Ovary (tissue), 10 donors: ENCODE measurements at regions of chr14 and their contacts with region 1.

Region 1: DNA sequence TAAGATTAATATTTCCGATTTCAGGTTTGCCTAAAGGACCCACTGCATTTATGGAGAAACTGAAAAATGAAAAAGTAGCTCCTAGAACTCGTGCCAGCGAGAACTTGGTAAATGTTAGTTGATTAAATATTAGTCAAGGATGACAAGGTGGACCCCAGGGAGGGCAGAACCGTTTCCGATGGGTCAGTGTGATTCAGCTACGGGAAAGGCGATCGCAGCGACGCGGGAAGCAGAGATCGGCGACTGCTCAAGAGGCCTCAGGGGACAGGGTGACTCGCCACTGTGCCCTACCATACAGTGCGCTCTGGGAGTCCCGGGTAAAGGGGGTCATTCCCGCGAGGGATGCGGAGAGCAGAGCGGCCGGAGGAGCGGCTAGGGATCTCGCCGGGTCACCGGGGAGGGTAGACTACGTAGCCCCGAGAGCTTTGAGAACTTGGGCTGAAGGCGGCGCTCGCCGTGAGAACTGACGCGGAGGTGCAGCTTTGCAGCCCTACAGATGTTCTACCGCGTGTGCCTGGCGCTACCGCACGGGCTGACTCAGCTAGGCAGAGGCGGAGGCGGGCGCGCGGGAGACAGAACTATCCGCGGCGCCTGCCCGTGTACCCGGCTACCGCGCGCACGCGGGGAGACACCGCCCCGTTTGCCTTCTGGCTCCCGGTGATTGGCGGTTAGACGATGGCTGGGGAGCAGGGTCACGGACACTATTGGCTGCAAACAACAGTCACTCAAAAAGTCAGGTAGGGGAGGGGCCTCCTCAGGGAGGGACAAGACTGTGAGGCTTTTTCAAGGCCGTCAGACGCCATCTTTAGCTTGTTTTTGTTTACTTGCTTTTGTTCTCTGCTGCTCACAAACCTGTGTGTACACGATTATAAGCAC is 3.2 kb downstream of the C14orf93 start:
- DNase-seq: peak; percentile 94 to 96 (median 95)
- H3K4me3 ChIP-seq: peak overlapping the region; percentile 56
- H3K27ac ChIP-seq: peak overlapping the region; percentile 8 to 90
- H3K4me1 ChIP-seq: peaks cover 6% of the 10 kb centered on the region
- H3K27me3 ChIP-seq: no peaks in the 10 kb centered on the region
- CTCF ChIP-seq: peak in 1 of 3 donors; percentile 28
- EP300 ChIP-seq: no peak
- POLR2A ChIP-seq: peak; percentile 63

Region 2: GRCh38 chr14:23301288-23301968 is 294.6 kb after region 1 on chr14:
- intact Hi-C with region 1: loop called in 1 of 4 experiments (anchors 5 kb)
- DNase-seq: peak; percentile 98 to 99 (median 98)
- H3K4me3 ChIP-seq: peak overlapping the region; percentile 63
- H3K27ac ChIP-seq: peak overlapping the region; percentile 92 to 94
- H3K4me1 ChIP-seq: no peaks in the 10 kb centered on the region
- H3K27me3 ChIP-seq: no peaks in the 10 kb centered on the region
- CTCF ChIP-seq: peak; percentile 51 to 99 (median 99)
- EP300 ChIP-seq: peak; percentile 41
- POLR2A ChIP-seq: peak; percentile 67